Tibial artery (tissue), 4 donors: ENCODE measurements at regions of chr17 and their contacts with region 1.

Region 1: GRCh38 chr17:21419299-21420239 is 43.4 kb downstream of the KCNJ12 start:
- DNase-seq: no peak
- H3K4me3 ChIP-seq: no peak overlapping the region
- H3K27ac ChIP-seq: no peak overlapping the region
- H3K4me1 ChIP-seq: no peaks in the 10 kb centered on the region
- H3K27me3 ChIP-seq: no peaks in the 10 kb centered on the region
- CTCF ChIP-seq: no peak

Region 2: DNA sequence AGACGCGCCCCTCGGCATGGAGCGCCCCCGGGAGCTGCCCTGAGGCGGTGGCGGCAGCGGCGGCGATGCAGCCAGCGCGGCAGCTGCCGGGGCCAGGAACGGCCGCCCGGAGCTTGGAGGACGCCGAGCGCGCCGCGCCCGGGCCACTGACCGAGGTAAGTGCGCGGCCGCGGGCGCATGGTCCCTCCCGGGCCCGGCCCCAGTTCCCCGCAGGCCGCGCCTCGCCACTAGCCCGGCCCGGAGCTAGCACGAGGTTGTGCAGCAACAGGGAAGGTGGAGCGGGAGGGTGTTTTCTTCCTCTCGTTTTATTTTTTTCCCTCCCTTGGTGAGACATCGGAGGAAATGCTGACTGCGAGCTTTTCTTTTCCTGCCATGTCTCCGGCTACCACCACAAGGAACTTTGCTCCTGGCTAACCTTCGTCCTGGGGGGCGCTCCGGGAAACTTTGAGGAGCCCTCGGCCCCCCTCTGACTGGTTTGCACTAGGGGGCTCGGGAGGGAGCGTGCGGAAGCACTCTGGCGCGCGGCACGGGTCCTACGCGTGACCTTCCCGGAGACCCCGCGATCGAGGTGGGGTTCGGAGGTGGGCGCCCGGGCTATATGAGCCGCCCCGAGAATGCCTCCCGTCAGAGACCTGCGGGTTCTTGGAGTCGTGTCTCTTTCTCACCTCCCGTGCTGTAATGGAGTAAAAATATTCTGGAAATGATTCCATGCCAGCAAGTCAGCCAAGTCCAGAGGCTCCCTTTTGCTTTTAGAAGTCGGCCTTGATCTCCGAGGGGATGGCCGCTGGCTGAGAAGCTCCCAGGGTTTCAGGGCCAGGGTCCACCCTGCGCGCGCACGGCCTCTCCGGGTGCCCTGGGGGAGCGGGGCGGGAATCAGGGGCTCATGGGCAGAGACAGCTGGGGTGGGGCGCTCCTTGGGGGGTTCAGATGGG is 42.5 kb before region 1 on chr17:
- intact Hi-C with region 1: no loop called
- DNase-seq: no peak
- H3K4me3 ChIP-seq: peak overlapping the region; percentile 42 to 60
- H3K27ac ChIP-seq: peak overlapping the region in 1 of 2 donors; percentile 3
- H3K4me1 ChIP-seq: peaks cover 0 to 31% (median 27%) of the 10 kb centered on the region in 4 donors
- H3K27me3 ChIP-seq: peaks cover 0 to 62% of the 10 kb centered on the region in 2 donors
- CTCF ChIP-seq: no peak

Region 3: DNA sequence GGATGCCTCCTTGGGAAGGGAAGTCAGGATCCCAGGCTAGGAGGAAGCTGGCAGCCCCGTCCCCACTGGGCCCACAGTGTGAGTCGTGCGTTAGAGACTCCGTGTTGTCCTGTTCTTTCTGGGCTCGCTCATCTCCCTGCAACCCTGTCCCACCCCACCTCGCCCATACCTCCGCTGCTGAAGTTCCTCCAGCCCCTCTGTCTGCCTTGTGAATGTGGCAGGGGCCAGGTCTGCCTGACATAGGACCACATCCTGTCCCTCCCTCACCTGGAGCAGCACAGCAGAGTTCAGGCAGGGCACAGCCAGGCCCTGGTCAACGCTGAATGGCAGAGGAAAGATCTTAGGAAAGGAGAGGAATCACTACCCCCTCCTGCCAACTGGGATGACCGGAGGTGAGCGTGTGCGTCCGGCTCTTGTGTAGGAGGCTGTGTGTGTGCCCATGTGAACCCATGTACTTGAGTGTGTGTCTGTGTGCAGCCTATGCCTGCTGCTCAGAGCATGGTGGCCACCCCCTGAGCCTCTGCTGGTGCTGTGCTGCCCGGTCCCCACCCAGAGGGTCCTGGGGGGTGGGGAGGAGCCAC is 285.5 kb after region 1 on chr17:
- intact Hi-C with region 1: loop called (anchors 5 kb)
- DNase-seq: peak in 1 of 2 donors; percentile 62
- H3K4me3 ChIP-seq: no peak overlapping the region
- H3K27ac ChIP-seq: no peak overlapping the region
- H3K4me1 ChIP-seq: no peaks in the 10 kb centered on the region
- H3K27me3 ChIP-seq: no peaks in the 10 kb centered on the region
- CTCF ChIP-seq: no peak